RWPE1 (cell line): ENCODE measurements at regions of chr5 and their contacts with region 1.

Region 1: DNA sequence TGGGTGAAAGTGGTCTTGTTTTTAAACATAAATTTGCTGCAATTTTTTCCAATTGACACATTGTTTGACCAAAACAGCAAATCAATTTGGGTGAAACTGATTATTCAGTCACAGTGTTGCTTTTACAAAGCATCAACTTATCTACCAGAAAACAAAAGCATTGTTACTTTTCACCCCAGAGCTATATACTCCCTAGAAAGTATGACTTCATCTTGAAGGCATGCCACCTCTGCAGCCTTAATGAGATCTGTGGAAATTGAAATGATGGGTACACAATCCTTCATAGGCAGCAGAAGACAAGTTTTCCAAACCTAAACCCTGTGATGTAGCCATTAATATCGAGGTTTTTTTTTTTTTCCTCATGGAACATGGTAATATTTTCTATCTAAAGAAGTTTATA is 615.9 kb downstream of the CHSY3 start:
- DNase-seq: peak; percentile 83
- H3K27ac ChIP-seq: no peak overlapping the region
- CTCF ChIP-seq: no peak

Region 2: DNA sequence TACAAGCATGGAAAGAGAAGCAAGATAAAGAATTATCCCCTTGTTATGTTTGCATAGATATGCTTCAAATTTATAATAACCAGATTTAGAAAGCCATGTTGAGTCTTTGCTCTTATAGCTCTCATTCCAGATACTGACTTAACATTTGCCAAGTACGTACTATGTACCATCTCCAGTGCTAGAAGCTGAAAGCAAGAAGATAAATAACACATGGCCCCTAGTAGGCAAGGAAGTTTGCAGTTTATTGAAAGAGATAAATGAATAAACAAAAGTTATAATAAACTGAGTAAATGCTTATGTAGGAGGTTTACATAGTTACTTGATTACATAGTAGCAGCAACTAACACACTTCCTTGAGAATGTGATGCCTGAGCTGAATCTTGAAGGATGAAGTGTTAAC is 16.5 kb after region 1 on chr5:
- CTCF ChIA-PET with region 1: interaction called, 11 read pairs
- POLR2A ChIA-PET with region 1: no interaction called
- DNase-seq: no peak
- H3K27ac ChIP-seq: no peak overlapping the region
- CTCF ChIP-seq: no peak